CD4-positive, alpha-beta T cell (primary cell): ENCODE measurements at regions of chr1 and their contacts with region 1.

Region 1: GRCh38 chr1:154419620-154420571 is 14.8 kb downstream of the IL6R start:
- DNase-seq: peak in 13 of 14 experiments; percentile 47 to 79 (median 64)
- ATAC-seq: peak; percentile 73
- H3K4me3 ChIP-seq: peak overlapping the region; percentile 41
- H3K4me3 Mint-ChIP-seq: peak overlapping the region; percentile 74
- H3K27ac ChIP-seq: peak overlapping the region; percentile 69 to 85
- H3K27ac Mint-ChIP-seq: peak overlapping the region; percentile 91
- H3K4me1 ChIP-seq: peaks cover 96% of the 10 kb centered on the region
- H3K4me1 Mint-ChIP-seq: peaks cover 92% of the 10 kb centered on the region
- H3K27me3 ChIP-seq: no peaks in the 10 kb centered on the region
- H3K27me3 Mint-ChIP-seq: no peaks in the 10 kb centered on the region
- CTCF ChIP-seq: no peak

Region 2: GRCh38 chr1:154352581-154353459 is 67.1 kb before region 1 on chr1:
- CTCF ChIA-PET with region 1: no interaction called
- POLR2A ChIA-PET with region 1: interaction called, 12 read pairs
- intact Hi-C with region 1: no loop called
- DNase-seq: peak in 11 of 14 experiments; percentile 22 to 80 (median 53)
- ATAC-seq: peak; percentile 82
- H3K4me3 ChIP-seq: peak overlapping the region; percentile 64
- H3K4me3 Mint-ChIP-seq: peak overlapping the region; percentile 92
- H3K27ac ChIP-seq: peak overlapping the region; percentile 40 to 55
- H3K27ac Mint-ChIP-seq: peak overlapping the region; percentile 75
- H3K4me1 ChIP-seq: peaks cover 45% of the 10 kb centered on the region
- H3K4me1 Mint-ChIP-seq: peaks cover 54% of the 10 kb centered on the region
- H3K27me3 ChIP-seq: no peaks in the 10 kb centered on the region
- H3K27me3 Mint-ChIP-seq: no peaks in the 10 kb centered on the region
- CTCF ChIP-seq: peak; percentile 10

Region 3: GRCh38 chr1:154386643-154387352 is 33.1 kb before region 1 on chr1:
- CTCF ChIA-PET with region 1: no interaction called
- POLR2A ChIA-PET with region 1: interaction called, 19 read pairs
- intact Hi-C with region 1: no loop called
- DNase-seq: peak; percentile 43 to 93 (median 65)
- ATAC-seq: peak; percentile 85
- H3K4me3 ChIP-seq: peak overlapping the region; percentile 27
- H3K4me3 Mint-ChIP-seq: peak overlapping the region; percentile 85
- H3K27ac ChIP-seq: peak overlapping the region; percentile 86 to 88
- H3K27ac Mint-ChIP-seq: peak overlapping the region; percentile 89
- H3K4me1 ChIP-seq: peaks cover 48% of the 10 kb centered on the region
- H3K4me1 Mint-ChIP-seq: peaks cover 45% of the 10 kb centered on the region
- H3K27me3 ChIP-seq: no peaks in the 10 kb centered on the region
- H3K27me3 Mint-ChIP-seq: no peaks in the 10 kb centered on the region
- CTCF ChIP-seq: no peak

Region 4: DNA sequence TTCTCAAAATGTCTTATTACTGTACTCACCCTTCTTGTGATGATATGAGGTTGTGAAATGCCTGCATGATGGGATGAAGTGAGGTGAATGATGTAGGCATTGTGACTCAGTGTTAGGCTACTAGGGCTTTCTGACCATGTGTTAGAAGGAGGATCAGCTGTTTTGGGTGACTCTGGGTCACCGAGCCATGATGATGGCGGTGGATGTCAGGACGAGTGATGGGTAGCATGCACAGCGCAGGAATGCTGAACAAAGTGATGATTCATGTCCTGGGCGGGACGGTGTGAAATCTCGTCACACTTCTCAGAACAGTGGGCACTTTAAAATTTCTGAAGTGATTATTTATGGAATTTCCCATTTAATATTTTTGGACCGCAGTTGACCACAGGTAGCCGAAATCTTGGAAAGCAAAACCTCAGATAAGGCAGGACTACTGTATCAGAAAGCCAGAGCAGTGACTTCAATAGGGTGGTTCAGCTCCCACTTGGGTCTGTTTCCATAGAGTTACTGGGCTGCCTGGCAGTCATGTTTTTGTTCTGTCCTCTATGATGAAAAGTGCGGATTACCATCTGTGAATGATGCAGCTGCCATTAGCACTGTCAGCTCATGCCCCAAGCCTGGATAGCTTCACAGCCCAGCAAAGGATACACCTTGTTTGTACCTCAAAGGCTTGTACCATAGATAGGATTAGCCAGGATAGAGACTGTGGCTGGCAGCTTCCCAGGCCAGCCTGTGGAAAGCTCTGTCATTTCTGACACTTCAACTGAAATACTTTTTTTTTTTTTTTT is 11.9 kb after region 1 on chr1:
- CTCF ChIA-PET with region 1: no interaction called
- POLR2A ChIA-PET with region 1: interaction called, 15 read pairs
- intact Hi-C with region 1: no loop called
- DNase-seq: peak in 5 of 14 experiments; percentile 28 to 79 (median 54)
- ATAC-seq: peak; percentile 60
- H3K4me3 ChIP-seq: no peak overlapping the region
- H3K4me3 Mint-ChIP-seq: no peak overlapping the region
- H3K27ac ChIP-seq: no peak overlapping the region
- H3K27ac Mint-ChIP-seq: peak overlapping the region; percentile 88
- H3K4me1 ChIP-seq: peaks cover 66% of the 10 kb centered on the region
- H3K4me1 Mint-ChIP-seq: peaks cover 54% of the 10 kb centered on the region
- H3K27me3 ChIP-seq: no peaks in the 10 kb centered on the region
- H3K27me3 Mint-ChIP-seq: no peaks in the 10 kb centered on the region
- CTCF ChIP-seq: no peak

Region 5: GRCh38 chr1:154442006-154442740 is 22.3 kb after region 1 on chr1:
- CTCF ChIA-PET with region 1: interaction called, 3 read pairs
- POLR2A ChIA-PET with region 1: interaction called, 34 read pairs
- intact Hi-C with region 1: no loop called
- DNase-seq: peak in 1 of 14 experiments; percentile 47
- ATAC-seq: peak; percentile 6
- H3K4me3 ChIP-seq: peak overlapping the region; percentile 20
- H3K4me3 Mint-ChIP-seq: peak overlapping the region; percentile 81
- H3K27ac ChIP-seq: peak overlapping the region; percentile 72 to 75
- H3K27ac Mint-ChIP-seq: peak overlapping the region; percentile 94
- H3K4me1 ChIP-seq: peaks cover 77% of the 10 kb centered on the region
- H3K4me1 Mint-ChIP-seq: peaks cover 75% of the 10 kb centered on the region
- H3K27me3 ChIP-seq: no peaks in the 10 kb centered on the region
- H3K27me3 Mint-ChIP-seq: no peaks in the 10 kb centered on the region
- CTCF ChIP-seq: peak; percentile 34

Region 6: DNA sequence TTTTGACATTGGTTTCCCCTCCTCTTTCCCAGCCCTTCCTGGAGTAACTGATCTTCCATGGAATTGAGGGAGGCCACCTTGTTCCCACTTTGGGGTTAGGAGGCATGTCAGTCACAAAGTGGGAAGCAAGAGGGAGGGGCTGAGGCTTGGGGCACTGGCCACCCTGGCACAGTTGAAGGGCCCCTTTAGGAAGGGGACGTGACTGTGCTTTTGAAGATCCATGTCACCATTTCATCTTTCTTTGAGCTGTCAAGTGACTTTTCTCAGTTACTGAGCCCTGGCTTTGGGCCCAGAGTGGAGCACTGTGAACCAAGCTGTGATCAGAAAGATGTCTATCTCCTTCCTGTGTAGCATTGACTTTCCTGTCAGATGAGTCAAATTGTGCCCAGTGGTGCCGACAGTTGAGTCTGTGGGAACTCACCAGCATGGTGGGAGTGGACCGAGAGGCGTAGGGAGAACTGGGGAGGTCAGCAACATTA is 43.7 kb after region 1 on chr1:
- CTCF ChIA-PET with region 1: no interaction called
- POLR2A ChIA-PET with region 1: interaction called, 20 read pairs
- intact Hi-C with region 1: loop called in 1 of 2 experiments (anchors 5 kb)
- DNase-seq: peak; percentile 47 to 87 (median 70)
- ATAC-seq: peak; percentile 71
- H3K4me3 ChIP-seq: no peak overlapping the region
- H3K4me3 Mint-ChIP-seq: peak overlapping the region; percentile 87
- H3K27ac ChIP-seq: peak overlapping the region; percentile 40 to 59
- H3K27ac Mint-ChIP-seq: peak overlapping the region; percentile 93
- H3K4me1 ChIP-seq: peaks cover 95% of the 10 kb centered on the region
- H3K4me1 Mint-ChIP-seq: peaks cover 82% of the 10 kb centered on the region
- H3K27me3 ChIP-seq: no peaks in the 10 kb centered on the region
- H3K27me3 Mint-ChIP-seq: no peaks in the 10 kb centered on the region
- CTCF ChIP-seq: no peak

Region 7: DNA sequence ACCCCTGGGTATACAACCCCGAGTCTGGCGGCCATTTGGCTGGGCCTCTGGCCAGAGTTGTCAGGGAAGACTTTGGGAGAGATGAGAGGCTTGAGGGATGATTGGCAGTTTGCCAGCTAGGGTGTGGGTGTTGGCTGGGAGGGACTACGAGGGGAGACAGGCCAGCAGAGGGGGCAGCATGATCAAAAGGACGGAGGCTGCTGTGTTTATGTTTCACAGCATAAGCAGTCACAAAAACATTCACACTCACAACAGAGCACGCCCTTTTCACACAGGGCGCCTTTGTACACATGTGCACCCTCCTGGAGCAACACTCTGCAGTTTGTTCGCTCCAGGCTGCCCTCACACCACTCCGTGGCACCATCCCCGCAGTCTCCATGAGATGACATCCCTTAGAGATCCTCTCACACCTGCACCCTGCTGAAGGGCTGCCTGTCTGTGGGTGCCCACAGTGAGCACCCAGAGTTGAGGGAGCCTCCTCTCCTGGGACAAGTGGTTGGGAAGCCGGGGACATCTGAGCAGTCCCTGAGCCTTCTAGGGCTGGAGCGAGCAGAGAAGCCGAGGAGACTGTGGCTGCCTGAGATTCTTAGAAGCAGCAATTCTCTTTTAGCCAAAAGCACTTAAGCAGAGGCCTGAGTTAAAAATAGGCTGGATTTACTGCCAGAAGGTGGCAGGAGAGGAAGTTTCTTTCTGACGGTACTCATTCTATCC is 674.2 kb after region 1 on chr1:
- CTCF ChIA-PET with region 1: no interaction called
- POLR2A ChIA-PET with region 1: no interaction called
- intact Hi-C with region 1: no loop called
- DNase-seq: peak in 4 of 14 experiments; percentile 20 to 59 (median 48)
- ATAC-seq: peak; percentile 48
- H3K4me3 ChIP-seq: no peak overlapping the region
- H3K4me3 Mint-ChIP-seq: no peak overlapping the region
- H3K27ac ChIP-seq: no peak overlapping the region
- H3K27ac Mint-ChIP-seq: no peak overlapping the region
- H3K4me1 ChIP-seq: peaks cover 9% of the 10 kb centered on the region
- H3K4me1 Mint-ChIP-seq: peaks cover 5% of the 10 kb centered on the region
- H3K27me3 ChIP-seq: no peaks in the 10 kb centered on the region
- H3K27me3 Mint-ChIP-seq: no peaks in the 10 kb centered on the region
- CTCF ChIP-seq: no peak